Activated CD4-positive, alpha-beta memory T cell treated with anti-CD3 and anti-CD28 coated beads for 36 hours (primary cell): ENCODE measurements at regions of chr13 and their contacts with region 1.

Region 1: DNA sequence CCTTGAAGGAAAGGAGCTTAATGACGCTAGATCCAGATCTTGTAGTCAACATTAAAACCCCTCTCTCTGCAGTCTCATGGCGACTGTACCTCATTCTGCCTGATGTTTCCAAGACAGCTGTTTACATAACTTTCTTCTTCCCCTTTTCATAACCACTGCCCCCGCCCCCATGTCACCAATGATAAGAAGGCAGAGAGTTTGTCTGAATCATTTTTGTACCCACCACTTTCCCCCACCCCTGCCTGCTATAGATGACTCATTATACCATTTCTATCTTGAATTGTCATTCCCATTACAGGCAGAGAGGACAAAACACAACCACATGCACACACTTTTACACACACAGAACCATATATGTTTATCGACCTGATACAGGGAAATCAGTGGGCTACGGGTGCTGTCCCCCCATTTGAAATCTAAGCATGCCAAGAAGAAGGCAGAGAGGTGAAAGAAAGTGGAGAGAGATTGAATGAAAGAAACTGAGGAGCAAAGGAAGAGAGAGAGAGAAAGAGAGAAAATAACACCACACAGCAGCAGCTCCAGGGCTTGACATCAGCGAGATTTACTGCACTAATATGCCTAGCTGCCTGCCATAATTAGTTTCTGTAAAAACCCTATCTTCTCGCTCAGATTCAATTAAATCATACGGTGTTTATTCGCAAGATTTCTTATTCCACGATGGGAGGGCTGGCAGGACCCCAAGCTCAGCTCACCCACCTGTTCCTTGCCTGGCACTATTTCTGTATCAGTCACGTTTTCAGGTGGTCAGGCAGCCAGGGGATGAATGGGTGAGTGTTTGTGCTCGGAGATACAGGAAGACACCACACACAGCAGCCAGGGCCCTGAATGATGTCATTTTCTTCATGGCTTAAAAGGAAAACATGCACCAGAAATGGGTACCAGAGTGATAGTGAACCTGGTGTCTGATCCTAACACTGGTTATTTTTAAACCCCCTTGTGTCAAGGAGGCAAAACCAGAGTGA is 114.3 kb upstream of the SERP2 start:
- DNase-seq: peak; percentile 88
- H3K4me3 Mint-ChIP-seq: peak overlapping the region; percentile 45
- H3K27ac Mint-ChIP-seq: peak overlapping the region; percentile 72
- H3K4me1 Mint-ChIP-seq: peaks cover 20% of the 10 kb centered on the region
- H3K27me3 Mint-ChIP-seq: peaks cover 9% of the 10 kb centered on the region

Region 2: GRCh38 chr13:44022163-44022562 is 237.2 kb before region 1 on chr13:
- CTCF ChIA-PET with region 1: no interaction called
- POLR2A ChIA-PET with region 1: no interaction called
- intact Hi-C with region 1: no loop called
- DNase-seq: no peak
- H3K4me3 Mint-ChIP-seq: no peak overlapping the region
- H3K27ac Mint-ChIP-seq: no peak overlapping the region
- H3K4me1 Mint-ChIP-seq: no peaks in the 10 kb centered on the region
- H3K27me3 Mint-ChIP-seq: peaks cover 4% of the 10 kb centered on the region

Region 3: DNA sequence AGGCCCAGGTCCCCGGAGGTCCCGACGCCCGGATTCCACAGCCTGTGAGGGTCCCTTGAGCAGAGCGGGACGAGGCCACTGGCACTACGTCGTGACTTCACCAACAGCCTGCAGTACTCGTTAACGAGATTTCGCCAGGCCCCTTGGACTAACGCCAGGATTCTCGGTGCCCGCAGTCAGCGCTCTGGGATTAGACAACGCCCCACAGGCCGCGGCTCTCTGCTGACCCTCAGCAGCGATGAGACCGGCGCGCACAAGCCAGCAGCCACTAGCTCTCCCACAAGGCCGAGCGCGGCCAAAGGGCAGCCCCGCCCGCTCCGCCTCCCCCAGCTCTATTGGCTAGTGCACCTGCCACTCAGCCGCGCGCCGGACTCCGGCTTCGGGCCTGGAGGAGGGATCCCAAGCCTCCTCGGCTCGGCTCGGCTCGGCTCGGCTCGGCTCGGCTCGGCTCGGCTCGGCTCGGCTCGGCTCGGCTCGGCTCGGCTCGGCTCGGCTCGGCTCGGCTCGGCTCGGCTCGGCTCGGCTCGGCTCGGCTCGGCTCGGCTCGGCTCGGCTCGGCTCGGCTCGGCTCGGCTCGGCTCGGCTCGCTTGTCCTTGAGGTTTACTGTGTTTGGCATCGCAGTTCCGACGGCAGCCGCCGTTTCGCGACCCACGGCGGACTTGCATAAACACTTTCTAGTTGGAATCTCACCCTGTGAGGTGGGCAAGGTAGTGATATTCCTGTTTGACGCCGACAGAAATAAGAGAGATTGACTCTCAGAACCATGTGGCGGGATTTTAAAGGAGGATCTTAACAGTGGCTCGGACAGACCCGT is 117.4 kb before region 1 on chr13:
- CTCF ChIA-PET with region 1: no interaction called
- POLR2A ChIA-PET with region 1: no interaction called
- intact Hi-C with region 1: loop called (anchors 1 kb)
- DNase-seq: peak; percentile 96
- H3K4me3 Mint-ChIP-seq: peak overlapping the region; percentile 85
- H3K27ac Mint-ChIP-seq: peak overlapping the region; percentile 75
- H3K4me1 Mint-ChIP-seq: peaks cover 12% of the 10 kb centered on the region
- H3K27me3 Mint-ChIP-seq: peaks cover 2% of the 10 kb centered on the region

Region 4: GRCh38 chr13:44237276-44237767 is 22.0 kb before region 1 on chr13:
- CTCF ChIA-PET with region 1: interaction called, 3 read pairs
- POLR2A ChIA-PET with region 1: no interaction called
- intact Hi-C with region 1: loop called (anchors 1 kb)
- DNase-seq: peak; percentile 52
- H3K4me3 Mint-ChIP-seq: no peak overlapping the region
- H3K27ac Mint-ChIP-seq: no peak overlapping the region
- H3K4me1 Mint-ChIP-seq: peaks cover 8% of the 10 kb centered on the region
- H3K27me3 Mint-ChIP-seq: peaks cover 8% of the 10 kb centered on the region

Region 5: DNA sequence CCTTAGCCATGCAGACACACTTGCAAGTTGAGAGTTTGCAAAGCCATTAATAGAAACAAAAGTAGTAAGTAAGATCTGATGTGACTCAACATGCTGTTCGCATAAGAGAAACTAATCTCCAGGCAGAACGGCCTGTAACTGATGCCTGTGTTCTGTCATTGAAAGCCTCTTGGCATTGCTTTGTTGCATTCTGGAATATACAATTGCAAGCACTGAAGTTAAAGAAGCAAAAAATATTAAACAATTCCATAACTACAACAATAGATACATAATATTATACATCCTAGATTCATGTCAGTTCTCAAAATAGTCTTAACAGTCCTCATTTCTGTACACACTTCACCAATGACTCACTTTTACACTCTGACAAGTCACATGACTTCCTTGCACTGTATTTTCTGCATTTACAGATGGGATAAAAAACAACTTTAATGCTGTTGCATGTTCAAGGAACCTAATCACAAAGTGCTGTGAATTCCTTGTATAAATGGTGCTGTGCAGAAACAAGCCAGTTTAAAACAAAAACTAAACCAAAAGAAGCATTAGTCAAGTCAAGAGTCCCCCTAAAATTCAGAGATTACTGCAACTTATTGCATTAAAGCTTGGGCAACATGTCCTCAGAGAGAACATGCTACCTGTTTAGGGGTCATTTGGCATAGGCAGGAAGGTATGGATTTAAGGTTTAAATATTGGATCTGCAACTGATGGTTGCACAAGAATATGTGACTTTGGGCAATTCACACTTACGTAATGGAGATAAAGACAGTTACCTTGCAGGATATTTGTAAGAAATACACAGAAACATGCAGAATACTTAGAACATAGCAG is 34.8 kb after region 1 on chr13:
- CTCF ChIA-PET with region 1: no interaction called
- POLR2A ChIA-PET with region 1: no interaction called
- intact Hi-C with region 1: loop called (anchors 1 kb)
- DNase-seq: peak; percentile 12
- H3K4me3 Mint-ChIP-seq: no peak overlapping the region
- H3K27ac Mint-ChIP-seq: peak overlapping the region; percentile 55
- H3K4me1 Mint-ChIP-seq: peaks cover 26% of the 10 kb centered on the region
- H3K27me3 Mint-ChIP-seq: peaks cover 16% of the 10 kb centered on the region